IMR-90 (cell line): ENCODE measurements at regions of chr2 and their contacts with region 1.

Region 1: GRCh38 chr2:120693121-120693520 is 42.5 kb upstream of the GLI2 start:
- DNase-seq: peak; percentile 47
- ATAC-seq: no peak
- H3K4me3 ChIP-seq: no peak overlapping the region
- H3K27ac ChIP-seq: no peak overlapping the region
- H3K4me1 ChIP-seq: peaks cover 5% of the 10 kb centered on the region; the same call in 1 of the 2 replicates
- H3K27me3 ChIP-seq: peaks cover 7% of the 10 kb centered on the region
- CTCF ChIP-seq: no peak
- POLR2A ChIP-seq: no peak
- RAD21 ChIP-seq: no peak

Region 2: DNA sequence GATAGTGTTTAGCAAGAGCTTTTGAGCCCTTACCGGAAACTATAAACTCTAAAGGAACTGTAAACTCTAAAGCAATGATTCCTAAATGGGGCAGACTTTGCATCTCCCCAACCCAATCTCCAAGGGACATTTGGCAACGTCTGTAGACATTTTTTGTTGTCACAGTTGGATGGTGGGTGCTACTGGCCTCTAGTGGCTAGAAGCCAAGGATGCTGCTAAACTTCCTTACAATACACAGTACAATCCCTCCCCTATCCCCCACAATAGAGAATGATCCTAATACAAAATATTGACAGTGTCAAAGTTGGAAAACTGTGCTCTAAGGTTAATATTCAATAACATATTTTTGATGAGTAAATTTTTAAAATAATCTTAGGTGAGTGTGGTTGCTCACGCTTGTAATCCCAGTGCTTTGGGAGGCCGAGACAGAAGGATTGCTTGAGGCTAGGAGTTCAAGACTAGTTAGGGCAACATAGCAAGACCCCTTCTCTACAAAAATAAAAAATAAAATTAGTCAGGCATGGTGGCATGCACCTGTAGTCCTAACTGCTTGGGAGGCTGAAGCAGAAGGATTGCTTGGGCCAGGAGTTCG is 866.7 kb before region 1 on chr2:
- CTCF ChIA-PET with region 1: no interaction called
- POLR2A ChIA-PET with region 1: no interaction called
- dilution Hi-C with region 1: no loop called
- in situ Hi-C with region 1: no loop called
- intact Hi-C with region 1: no loop called
- DNase-seq: peak; percentile 21
- ATAC-seq: peak; percentile 50; the same call in 1 of the 2 replicates
- H3K4me3 ChIP-seq: no peak overlapping the region
- H3K27ac ChIP-seq: no peak overlapping the region
- H3K4me1 ChIP-seq: peaks cover 4% of the 10 kb centered on the region
- H3K27me3 ChIP-seq: no peaks in the 10 kb centered on the region
- CTCF ChIP-seq: peak; percentile 50
- POLR2A ChIP-seq: no peak
- RAD21 ChIP-seq: peak; percentile 56

Region 3: GRCh38 chr2:120283649-120284048 is 409.5 kb before region 1 on chr2:
- CTCF ChIA-PET with region 1: no interaction called
- POLR2A ChIA-PET with region 1: no interaction called
- dilution Hi-C with region 1: no loop called
- in situ Hi-C with region 1: no loop called
- intact Hi-C with region 1: no loop called
- DNase-seq: peak; percentile 63
- ATAC-seq: peak; percentile 68
- H3K4me3 ChIP-seq: no peak overlapping the region
- H3K27ac ChIP-seq: no peak overlapping the region
- H3K4me1 ChIP-seq: peaks cover 10% of the 10 kb centered on the region
- H3K27me3 ChIP-seq: no peaks in the 10 kb centered on the region
- CTCF ChIP-seq: peak; percentile 51
- POLR2A ChIP-seq: no peak
- RAD21 ChIP-seq: peak; percentile 44

Region 4: DNA sequence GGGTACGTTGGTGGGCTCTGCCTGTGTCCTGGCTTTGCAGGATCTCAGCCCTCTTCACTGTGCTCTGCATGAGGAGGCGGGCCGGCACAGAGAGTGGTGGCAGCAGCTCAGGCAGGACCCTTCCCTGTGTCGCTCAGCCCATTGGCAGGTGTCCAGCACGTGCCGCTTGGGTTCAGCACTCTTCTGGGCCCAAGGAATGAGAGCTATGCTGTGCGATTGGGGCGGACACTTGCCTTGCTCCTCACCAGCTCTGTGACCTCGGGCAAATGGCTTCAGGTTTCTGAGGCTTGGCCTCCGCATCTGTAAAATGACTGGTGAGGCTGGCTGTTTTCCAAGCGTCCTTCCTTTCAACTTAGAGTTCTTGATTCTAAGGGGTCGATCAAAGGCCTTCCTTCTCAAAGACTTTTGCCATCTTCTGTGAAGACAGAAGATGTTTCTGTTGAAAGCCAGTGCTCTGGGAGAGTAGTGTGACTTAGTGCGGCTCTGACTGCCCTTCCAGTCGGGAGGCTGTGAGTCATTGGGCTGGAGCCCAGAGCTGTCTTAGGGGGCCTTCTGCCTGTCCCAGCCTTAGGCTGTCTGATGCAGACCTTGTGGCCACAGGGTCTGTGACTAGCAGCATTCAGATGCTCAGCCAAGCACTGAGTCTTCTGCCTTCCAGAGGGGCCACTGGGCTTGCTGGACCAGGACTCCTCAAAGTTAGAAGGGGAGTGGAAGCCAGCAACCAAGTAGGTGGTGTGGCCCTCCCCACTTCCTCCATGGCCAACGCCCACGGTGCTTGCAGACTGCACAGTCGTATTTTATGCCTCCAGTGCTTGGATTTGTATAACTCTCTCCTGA is 78.2 kb after region 1 on chr2:
- CTCF ChIA-PET with region 1: no interaction called
- POLR2A ChIA-PET with region 1: no interaction called
- dilution Hi-C with region 1: no loop called
- in situ Hi-C with region 1: no loop called
- intact Hi-C with region 1: loop called (anchors 10 kb)
- DNase-seq: peak; percentile 95
- ATAC-seq: peak; percentile 91
- H3K4me3 ChIP-seq: no peak overlapping the region
- H3K27ac ChIP-seq: peak overlapping the region; percentile 82
- H3K4me1 ChIP-seq: peaks cover 55% of the 10 kb centered on the region
- H3K27me3 ChIP-seq: no peaks in the 10 kb centered on the region
- CTCF ChIP-seq: no peak
- POLR2A ChIP-seq: peak; percentile 79
- RAD21 ChIP-seq: peak; percentile 31

Region 5: GRCh38 chr2:120825370-120826259 is 132.5 kb after region 1 on chr2:
- CTCF ChIA-PET with region 1: no interaction called
- POLR2A ChIA-PET with region 1: no interaction called
- dilution Hi-C with region 1: no loop called
- in situ Hi-C with region 1: no loop called
- intact Hi-C with region 1: loop called (anchors 10 kb)
- DNase-seq: peak; percentile 90
- ATAC-seq: peak; percentile 92
- H3K4me3 ChIP-seq: no peak overlapping the region
- H3K27ac ChIP-seq: peak overlapping the region; percentile 63
- H3K4me1 ChIP-seq: peaks cover 33% of the 10 kb centered on the region
- H3K27me3 ChIP-seq: no peaks in the 10 kb centered on the region
- CTCF ChIP-seq: no peak
- POLR2A ChIP-seq: no peak
- RAD21 ChIP-seq: no peak

Region 6: GRCh38 chr2:120856421-120856862 is 163.3 kb after region 1 on chr2:
- CTCF ChIA-PET with region 1: no interaction called
- POLR2A ChIA-PET with region 1: no interaction called
- dilution Hi-C with region 1: no loop called
- in situ Hi-C with region 1: no loop called
- intact Hi-C with region 1: loop called (anchors 1 kb)
- DNase-seq: peak; percentile 63
- ATAC-seq: peak; percentile 79
- H3K4me3 ChIP-seq: no peak overlapping the region
- H3K27ac ChIP-seq: no peak overlapping the region
- H3K4me1 ChIP-seq: peaks cover 27% of the 10 kb centered on the region
- H3K27me3 ChIP-seq: no peaks in the 10 kb centered on the region
- CTCF ChIP-seq: peak; percentile 59
- POLR2A ChIP-seq: no peak
- RAD21 ChIP-seq: peak; percentile 48

Region 7: DNA sequence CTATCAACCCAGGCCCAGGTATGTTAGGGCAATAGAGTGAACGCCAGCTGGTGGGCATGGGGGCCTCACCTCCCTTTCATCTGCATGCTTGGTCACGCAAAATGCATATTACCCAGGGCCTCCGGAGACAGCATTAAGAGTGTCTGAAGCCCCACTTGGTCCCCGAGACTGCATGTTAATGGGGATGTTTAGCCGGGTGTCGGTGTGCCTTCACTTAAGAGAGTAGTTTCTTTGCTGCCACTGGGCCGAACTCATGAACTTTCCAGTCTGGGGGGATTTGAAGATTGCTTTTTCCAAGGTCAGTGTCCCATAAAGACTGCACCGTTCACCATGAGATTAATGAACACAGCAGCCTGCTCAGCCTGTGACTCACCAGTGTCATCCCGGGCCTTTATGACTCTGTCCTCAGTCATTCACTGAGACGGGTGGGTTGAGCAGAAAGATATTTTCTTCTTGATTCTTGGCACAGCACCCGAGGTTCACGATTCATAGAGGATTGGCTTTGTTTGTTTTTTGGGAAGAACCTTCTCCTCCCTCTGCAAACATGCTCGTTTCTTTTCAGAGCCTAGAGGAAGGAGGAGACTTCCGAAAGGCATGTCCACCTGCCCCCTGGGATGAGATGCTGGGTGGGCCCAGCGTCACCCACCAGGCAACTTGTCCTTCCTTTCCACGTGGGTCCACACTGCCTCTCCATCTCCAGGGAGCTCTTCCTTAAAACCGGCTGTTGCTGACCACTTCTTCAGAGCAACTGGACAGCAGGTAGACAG is 241.6 kb after region 1 on chr2:
- CTCF ChIA-PET with region 1: no interaction called
- POLR2A ChIA-PET with region 1: no interaction called
- dilution Hi-C with region 1: no loop called
- in situ Hi-C with region 1: no loop called
- intact Hi-C with region 1: loop called (anchors 10 kb)
- DNase-seq: peak; percentile 94
- ATAC-seq: peak; percentile 56
- H3K4me3 ChIP-seq: no peak overlapping the region
- H3K27ac ChIP-seq: peak overlapping the region; percentile 89
- H3K4me1 ChIP-seq: peaks cover 71% of the 10 kb centered on the region
- H3K27me3 ChIP-seq: no peaks in the 10 kb centered on the region
- CTCF ChIP-seq: no peak
- POLR2A ChIP-seq: peak; percentile 29; the same call in 1 of the 2 replicates
- RAD21 ChIP-seq: no peak; the same call in 1 of the 2 replicates

Region 8: GRCh38 chr2:121071034-121071504 is 377.9 kb after region 1 on chr2:
- CTCF ChIA-PET with region 1: interaction called, 12 read pairs
- POLR2A ChIA-PET with region 1: interaction called, 3 read pairs
- dilution Hi-C with region 1: no loop called
- in situ Hi-C with region 1: loop called (anchors 5 kb)
- intact Hi-C with region 1: loop called (anchors 1 kb)
- DNase-seq: peak; percentile 31
- ATAC-seq: peak; percentile 69
- H3K4me3 ChIP-seq: no peak overlapping the region
- H3K27ac ChIP-seq: no peak overlapping the region
- H3K4me1 ChIP-seq: no peaks in the 10 kb centered on the region; the same call in 1 of the 2 replicates
- H3K27me3 ChIP-seq: peaks cover 36% of the 10 kb centered on the region
- CTCF ChIP-seq: peak; percentile 95
- POLR2A ChIP-seq: 0 out of 2 replicates have a peak, but pooled peaks have one; percentile 36
- RAD21 ChIP-seq: peak; percentile 92

Region 9: DNA sequence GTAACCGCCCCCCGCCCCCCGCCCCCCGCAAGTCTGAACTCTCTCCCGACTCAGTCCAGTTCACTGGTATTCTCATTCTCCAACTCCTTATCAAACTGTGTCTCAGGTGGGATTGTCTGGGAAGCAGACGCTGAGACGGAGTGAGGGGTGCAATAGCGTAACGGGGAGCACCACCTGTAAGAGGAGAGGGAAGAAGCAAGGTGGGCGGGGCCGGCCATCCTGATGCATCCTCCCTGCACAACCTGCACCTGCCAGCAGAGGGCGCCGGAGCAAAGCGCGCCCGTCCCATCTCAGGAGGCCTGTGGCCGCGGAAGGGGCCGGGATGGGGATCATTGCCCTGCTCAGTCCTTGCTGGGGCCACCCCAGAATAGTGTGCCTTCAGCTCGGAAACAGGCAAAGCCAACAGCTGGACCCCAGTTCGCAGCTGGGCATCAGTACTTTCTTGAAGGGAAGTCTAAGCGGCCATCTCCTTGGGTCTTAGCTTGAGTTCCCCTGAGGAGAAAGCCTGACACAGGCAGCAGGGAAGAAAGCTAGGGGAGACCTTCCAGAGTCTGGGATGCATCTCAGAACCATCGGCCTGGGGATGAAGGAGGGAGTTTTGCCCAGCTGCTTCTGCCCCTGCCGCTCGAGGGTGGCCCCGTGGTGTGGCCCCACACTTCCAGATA is 383.9 kb after region 1 on chr2:
- CTCF ChIA-PET with region 1: interaction called, 12 read pairs
- POLR2A ChIA-PET with region 1: interaction called, 3 read pairs
- dilution Hi-C with region 1: no loop called
- in situ Hi-C with region 1: loop called (anchors 5 kb)
- intact Hi-C with region 1: loop called (anchors 1 kb)
- DNase-seq: peak; percentile 28
- ATAC-seq: peak; percentile 59
- H3K4me3 ChIP-seq: no peak overlapping the region
- H3K27ac ChIP-seq: no peak overlapping the region
- H3K4me1 ChIP-seq: no peaks in the 10 kb centered on the region; the same call in 1 of the 2 replicates
- H3K27me3 ChIP-seq: peaks cover 17% of the 10 kb centered on the region; the same call in 1 of the 2 replicates
- CTCF ChIP-seq: peak; percentile 71
- POLR2A ChIP-seq: no peak
- RAD21 ChIP-seq: 0 out of 2 replicates have a peak, but pooled peaks have one; percentile 18